A549 (cell line): ENCODE measurements at regions of chr1 and their contacts with region 1.

Region 1: DNA sequence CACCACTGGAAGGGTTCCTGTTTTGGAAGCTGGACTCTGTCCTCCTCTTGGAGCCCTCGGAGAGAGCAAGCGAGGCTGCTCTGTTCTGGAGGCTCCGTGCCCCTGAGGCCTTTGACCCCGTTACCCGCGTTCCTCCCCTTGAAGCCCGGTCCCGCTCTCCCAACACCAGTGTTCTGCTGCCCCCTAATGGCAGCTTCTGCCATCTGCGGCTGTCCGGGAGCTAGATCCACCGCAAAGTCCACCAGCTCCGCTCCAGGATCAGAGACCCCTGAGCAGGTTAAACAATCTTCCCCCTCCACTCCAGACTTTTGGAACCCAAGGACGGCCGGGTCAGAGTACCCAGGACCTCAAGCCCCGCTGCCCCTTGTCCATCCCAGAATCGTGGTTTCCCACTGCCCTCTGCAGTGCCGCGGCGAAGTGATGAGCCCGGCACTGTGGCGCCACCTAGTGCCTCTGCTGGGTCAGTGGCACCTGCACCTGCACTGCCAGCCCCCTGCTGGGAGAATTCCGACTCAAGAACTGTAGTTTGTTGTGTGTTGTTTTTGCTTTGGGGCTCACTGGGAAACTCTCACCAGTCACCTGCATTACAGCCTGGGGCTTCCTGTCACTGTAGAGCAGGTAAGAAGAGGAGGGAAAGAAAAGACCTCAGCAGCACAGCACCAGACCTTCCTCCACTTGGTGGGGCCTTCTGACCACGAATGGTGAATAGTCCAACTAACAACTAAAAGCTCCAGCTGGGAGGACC is 63.5 kb upstream of the NFASC start:
- DNase-seq: peak; percentile 82 to 98
- ATAC-seq: peak; percentile 92 to 97
- H3K4me3 ChIP-seq: peak overlapping the region; percentile 44
- H3K27ac ChIP-seq: peak overlapping the region; percentile 65 to 83
- H3K4me1 ChIP-seq: no peaks in the 10 kb centered on the region
- CTCF ChIP-seq: peak; percentile 100
- EP300 ChIP-seq: no peak
- POLR2A ChIP-seq: no peak
- RAD21 ChIP-seq: peak; percentile 89 to 99

Region 2: DNA sequence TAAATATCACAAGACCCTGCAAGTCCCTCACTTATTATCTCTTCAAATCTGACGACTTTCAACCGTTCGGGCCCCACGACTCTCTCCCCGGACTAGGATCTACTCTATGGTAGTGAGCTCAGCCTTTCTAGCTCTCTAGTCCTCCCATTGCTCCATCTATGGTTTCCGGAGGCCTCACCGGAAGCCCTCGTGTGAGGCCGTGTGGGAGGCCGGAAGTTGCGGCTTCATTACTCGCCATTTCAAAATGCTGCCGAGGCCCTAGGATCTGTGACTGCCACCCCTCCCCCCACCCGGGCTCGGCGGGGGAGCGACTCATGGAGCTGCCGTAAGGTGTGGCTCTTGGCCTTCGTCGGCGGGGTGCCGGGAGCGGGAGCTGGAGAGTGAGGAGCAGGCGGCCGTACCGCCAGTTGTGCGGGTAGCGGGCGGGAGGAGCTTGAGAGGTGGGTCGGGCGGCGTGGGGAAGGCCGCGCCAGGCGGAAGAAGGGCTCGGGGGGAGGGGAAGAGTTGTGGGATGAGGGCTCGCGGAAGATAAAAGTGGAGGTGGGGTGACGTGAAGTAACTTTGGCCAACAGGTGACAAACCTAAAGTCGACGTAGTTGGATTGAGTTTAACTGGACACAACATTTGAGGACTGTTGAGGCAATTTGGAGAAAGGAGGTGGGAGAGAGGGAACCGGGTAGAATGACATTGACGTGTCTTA is 290.8 kb before region 1 on chr1 and contains the start of gene MDM4:
- CTCF ChIA-PET with region 1: interaction called, 18 read pairs
- POLR2A ChIA-PET with region 1: interaction called, 6 read pairs
- DNase-seq: peak; percentile 96 to 99
- ATAC-seq: peak; percentile 99
- H3K4me3 ChIP-seq: peak within 1 kb of the TSS; percentile 62
- H3K27ac ChIP-seq: peak within 1 kb of the TSS; percentile 96
- H3K4me1 ChIP-seq: peaks cover 12% of the 10 kb centered on the region
- CTCF ChIP-seq: no peak
- EP300 ChIP-seq: 0 out of 5 replicates have a peak, but pooled peaks of 1 of the 2 experiments have one; percentile 23
- POLR2A ChIP-seq: peak; percentile 47
- RAD21 ChIP-seq: no peak
- polyA plus RNA-seq, gene MDM4: 38.9 and 48.9 TPM in 2 replicates

Region 3: DNA sequence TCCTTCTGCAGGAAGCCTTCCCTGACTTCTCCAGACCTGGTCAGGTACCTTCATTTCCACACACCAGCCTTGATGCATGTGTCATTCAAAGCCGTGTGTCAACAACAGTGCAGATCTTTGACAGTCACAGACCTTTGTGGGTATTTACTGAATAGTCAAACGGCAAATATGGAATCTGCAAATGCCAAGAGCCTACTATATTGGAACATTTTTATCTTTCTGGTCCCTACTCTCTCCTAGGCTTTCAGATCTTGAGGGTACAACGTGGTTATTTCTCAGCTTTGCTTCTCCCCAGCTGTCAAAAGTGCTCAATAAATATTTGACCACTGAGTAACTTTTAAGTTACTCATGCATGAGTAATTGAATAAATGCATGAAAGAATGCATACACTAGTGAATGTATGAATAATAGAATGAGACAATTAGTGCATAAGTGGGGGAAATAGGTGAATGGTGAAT is 215.5 kb before region 1 on chr1:
- CTCF ChIA-PET with region 1: interaction called, 23 read pairs
- POLR2A ChIA-PET with region 1: no interaction called
- DNase-seq: no peak
- ATAC-seq: peak; percentile 48 to 74; a peak in 3 of 6 replicates
- H3K4me3 ChIP-seq: no peak overlapping the region
- H3K27ac ChIP-seq: no peak overlapping the region
- H3K4me1 ChIP-seq: peaks cover 15% of the 10 kb centered on the region; the same call in 2 of the 3 replicates
- CTCF ChIP-seq: no peak
- EP300 ChIP-seq: no peak
- POLR2A ChIP-seq: no peak
- RAD21 ChIP-seq: no peak; a peak in 1 of 5 replicates

Region 4: DNA sequence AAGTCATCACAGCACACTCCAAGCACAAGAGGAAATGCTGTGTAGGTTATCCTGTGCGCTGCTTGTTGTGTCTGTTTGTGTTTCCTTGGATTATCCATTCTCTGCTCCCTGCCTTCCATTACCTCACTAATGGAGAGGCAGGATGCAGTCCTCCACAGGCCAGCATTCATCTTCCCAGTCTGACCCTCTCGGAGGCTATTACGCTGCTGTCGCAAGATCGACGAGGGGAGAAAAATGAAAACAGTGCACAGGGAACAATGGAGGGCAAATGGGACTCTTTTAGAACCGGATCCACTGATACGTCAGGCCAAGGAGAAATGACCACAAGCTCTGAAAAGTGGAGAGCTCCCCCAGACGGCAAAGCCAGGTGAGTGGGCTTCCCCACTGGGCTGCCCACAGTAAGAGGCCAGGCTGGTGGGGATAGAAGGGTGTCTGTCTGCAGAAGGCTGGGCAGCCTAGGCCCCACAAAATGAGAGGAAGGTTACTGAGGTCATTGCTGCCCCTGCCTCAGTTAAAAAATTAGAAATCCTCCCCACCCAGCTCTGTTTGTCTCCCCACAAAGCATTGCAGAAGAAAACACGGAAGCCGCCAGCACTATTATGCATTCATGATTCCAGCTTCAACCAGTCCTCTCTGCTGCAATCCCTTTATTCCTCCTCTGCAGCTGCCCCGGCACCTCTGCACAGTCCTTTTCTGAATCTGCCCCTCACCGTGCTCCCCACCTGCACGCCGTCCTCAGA is 143.3 kb before region 1 on chr1:
- CTCF ChIA-PET with region 1: interaction called, 11 read pairs
- POLR2A ChIA-PET with region 1: no interaction called
- DNase-seq: no peak
- ATAC-seq: no peak
- H3K4me3 ChIP-seq: no peak overlapping the region
- H3K27ac ChIP-seq: no peak overlapping the region
- H3K4me1 ChIP-seq: no peaks in the 10 kb centered on the region
- CTCF ChIP-seq: no peak
- EP300 ChIP-seq: no peak
- POLR2A ChIP-seq: no peak
- RAD21 ChIP-seq: no peak

Region 5: DNA sequence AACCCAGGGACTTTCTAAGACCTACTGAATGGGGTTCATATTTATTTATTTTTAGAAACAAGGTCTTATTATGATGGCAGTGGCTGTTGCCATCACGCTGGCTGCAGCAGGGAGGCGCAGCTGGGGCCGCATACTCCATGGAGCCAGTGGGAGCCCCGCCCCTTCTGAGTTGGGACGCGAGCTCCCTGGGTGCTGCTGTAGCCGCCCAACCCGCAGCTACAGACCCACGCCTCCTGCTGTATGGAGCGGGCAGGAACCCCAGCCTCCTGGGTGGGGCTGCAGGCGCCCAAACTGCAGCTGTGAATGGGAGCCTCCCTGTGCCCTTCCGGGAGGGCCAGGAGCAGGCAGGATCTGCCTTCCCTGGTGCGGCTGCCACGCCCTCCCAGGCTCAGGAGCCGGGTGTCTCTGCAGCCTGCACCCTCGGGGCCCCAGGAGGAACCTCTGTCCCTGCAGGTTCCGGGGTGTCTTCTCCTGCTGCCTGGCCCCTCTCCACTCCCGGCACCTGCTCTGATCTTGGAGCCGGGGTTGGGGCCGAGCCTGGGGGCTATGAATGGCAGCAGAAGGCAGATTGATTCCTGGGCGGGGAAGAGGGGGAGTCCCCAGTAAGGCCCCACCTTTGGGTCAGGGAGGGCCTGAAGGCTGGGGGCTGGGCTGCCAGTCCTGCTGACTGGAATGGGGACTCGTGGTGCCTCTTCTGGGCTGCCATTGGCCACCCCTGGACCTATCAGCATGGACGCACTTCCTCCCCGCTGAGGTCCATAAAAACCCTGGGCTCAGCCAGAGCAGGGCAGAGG is 55.0 kb before region 1 on chr1:
- CTCF ChIA-PET with region 1: interaction called, 63 read pairs
- POLR2A ChIA-PET with region 1: no interaction called
- DNase-seq: peak; percentile 46 to 85
- ATAC-seq: peak; percentile 94 to 100
- H3K4me3 ChIP-seq: peak overlapping the region; percentile 37
- H3K27ac ChIP-seq: peak overlapping the region; percentile 59 to 83
- H3K4me1 ChIP-seq: peaks cover 14% of the 10 kb centered on the region
- CTCF ChIP-seq: peak; percentile 46
- EP300 ChIP-seq: no peak
- POLR2A ChIP-seq: peak; percentile 23; the same call in 1 of the 2 replicates
- RAD21 ChIP-seq: peak; percentile 34 to 57; a peak in 4 of 5 replicates

Region 6: DNA sequence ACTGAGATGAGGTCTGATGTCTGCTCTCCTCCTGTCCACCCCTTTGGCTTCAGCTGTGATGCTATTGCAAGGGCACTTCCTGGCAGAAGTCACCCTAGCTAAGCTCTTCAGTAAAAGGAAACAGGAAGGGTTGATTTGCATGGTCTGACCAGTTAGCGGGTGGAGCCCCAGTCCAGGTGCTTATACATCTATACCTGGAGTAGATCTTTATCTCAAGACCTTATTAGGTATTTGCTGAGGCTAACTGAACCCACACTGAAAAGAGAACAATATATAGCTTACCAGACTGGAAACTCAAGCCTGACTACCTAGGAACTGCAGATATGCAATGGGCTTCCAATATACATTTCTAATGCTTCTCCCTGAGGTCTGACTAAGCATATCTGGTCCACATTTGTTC is 34.7 kb after region 1 on chr1:
- CTCF ChIA-PET with region 1: interaction called, 21 read pairs
- POLR2A ChIA-PET with region 1: no interaction called
- DNase-seq: no peak
- ATAC-seq: no peak
- H3K4me3 ChIP-seq: no peak overlapping the region
- H3K27ac ChIP-seq: no peak overlapping the region
- H3K4me1 ChIP-seq: no peaks in the 10 kb centered on the region
- CTCF ChIP-seq: no peak
- EP300 ChIP-seq: no peak
- POLR2A ChIP-seq: no peak
- RAD21 ChIP-seq: no peak

Region 7: DNA sequence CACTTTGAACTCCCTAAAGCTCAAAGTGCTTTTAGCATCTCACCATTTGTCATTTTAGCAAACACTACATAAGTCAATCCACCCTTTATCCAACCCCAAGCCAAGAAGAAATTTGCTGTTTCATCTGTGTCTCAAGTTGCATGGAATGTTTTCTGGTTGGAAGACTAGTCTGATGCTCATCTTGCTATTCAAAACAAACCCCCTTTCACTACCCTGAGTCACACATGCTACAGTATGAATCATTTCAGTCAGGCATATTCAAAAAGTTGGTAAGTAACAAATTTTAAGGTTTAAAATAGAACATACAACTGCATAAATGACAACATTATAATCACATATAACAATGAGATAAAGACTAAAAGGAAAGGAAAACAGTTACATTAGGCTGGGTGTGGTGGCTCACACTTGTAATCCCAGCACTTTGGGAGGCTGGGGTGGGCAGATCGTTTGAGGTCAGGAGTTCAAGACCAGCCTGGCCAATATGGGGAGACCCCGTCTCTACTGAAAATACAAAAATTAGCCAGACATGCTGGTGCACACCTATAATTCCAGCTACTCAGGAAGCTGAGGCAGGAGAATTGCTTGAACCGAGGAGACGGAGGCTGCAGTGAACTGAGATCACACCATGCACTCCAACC is 365.7 kb after region 1 on chr1:
- CTCF ChIA-PET with region 1: no interaction called
- POLR2A ChIA-PET with region 1: no interaction called
- DNase-seq: peak; percentile 76 to 88
- ATAC-seq: peak; percentile 84 to 87
- H3K4me3 ChIP-seq: no peak overlapping the region
- H3K27ac ChIP-seq: peak overlapping the region; percentile 49 to 84; a peak in 5 of 6 replicates
- H3K4me1 ChIP-seq: peaks cover 47% of the 10 kb centered on the region
- CTCF ChIP-seq: no peak
- EP300 ChIP-seq: peak in 1 of 2 experiments; percentile 23; a peak in 1 of 5 replicates
- POLR2A ChIP-seq: no peak
- RAD21 ChIP-seq: no peak

Region 8: GRCh38 chr1:205255941-205256780 is 449.0 kb after region 1 on chr1:
- CTCF ChIA-PET with region 1: interaction called, 10 read pairs
- POLR2A ChIA-PET with region 1: no interaction called
- DNase-seq: peak; percentile 82
- ATAC-seq: peak; percentile 91 to 97
- H3K4me3 ChIP-seq: no peak overlapping the region
- H3K27ac ChIP-seq: peak overlapping the region in 1 of 2 experiments; percentile 51; a peak in 3 of 6 replicates
- H3K4me1 ChIP-seq: peaks cover 16% of the 10 kb centered on the region
- CTCF ChIP-seq: peak; percentile 95
- EP300 ChIP-seq: no peak
- POLR2A ChIP-seq: no peak
- RAD21 ChIP-seq: peak; percentile 97 to 100